BJ (cell line): ENCODE measurements at regions of chr9 and their contacts with region 1.

Region 1: GRCh38 chr9:129726322-129727160 is 26.3 kb downstream of the PTGES start:
- DNase-seq: peak; percentile 45
- H3K4me3 ChIP-seq: no peak overlapping the region
- H3K27me3 ChIP-seq: no peaks in the 10 kb centered on the region
- CTCF ChIP-seq: peak; percentile 99

Region 2: GRCh38 chr9:129495534-129496325 is 230.8 kb before region 1 on chr9:
- CTCF ChIA-PET with region 1: no interaction called
- POLR2A ChIA-PET with region 1: no interaction called
- DNase-seq: no peak
- H3K4me3 ChIP-seq: peak overlapping the region; percentile 82
- H3K27me3 ChIP-seq: no peaks in the 10 kb centered on the region
- CTCF ChIP-seq: no peak

Region 3: DNA sequence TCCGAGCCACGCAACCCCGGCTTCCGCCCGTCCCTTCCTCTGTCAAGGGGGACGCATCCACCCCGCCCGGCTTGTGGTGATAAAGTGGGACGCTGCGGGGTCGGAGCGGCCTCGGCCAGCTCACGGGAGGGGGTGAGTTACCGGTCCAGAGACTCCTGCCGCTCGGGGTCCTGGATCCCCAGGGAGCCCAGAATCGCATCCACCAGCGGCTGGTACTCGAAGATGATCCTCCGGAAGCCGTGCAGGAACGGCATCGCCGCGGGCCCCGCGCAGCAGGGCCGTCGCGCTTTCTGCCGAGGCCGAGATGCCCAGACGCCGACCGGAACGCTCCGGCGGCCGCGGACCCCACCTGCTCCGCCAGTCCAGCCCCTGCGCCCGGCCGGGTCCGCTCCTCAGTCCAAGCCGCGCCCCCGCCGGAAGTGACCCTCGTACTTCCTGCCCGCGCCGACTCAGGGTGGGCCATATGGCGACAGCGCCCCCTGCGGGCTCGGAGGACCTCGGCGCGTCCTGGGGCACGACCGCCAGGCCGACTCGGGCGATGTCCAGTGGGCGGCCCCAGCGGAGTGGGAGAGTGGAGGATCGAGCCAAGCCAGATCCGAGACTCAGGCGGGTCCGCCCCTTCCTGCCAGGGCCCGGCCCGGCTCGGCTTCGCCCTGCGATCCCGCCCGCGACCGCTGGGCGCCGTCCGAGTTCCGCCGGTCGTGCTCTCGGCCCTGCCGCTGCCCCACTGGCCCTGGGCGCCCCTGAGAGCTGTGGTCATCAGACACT is 84.6 kb before region 1 on chr9 and contains the start of gene ASB6:
- CTCF ChIA-PET with region 1: interaction called, 79 read pairs
- POLR2A ChIA-PET with region 1: no interaction called
- DNase-seq: peak; percentile 69
- H3K4me3 ChIP-seq: peak within 1 kb of the TSS; percentile 98
- H3K27me3 ChIP-seq: no peaks in the 10 kb centered on the region
- CTCF ChIP-seq: peak; percentile 83
- polyA plus RNA-seq, gene ASB6: 13.1 and 23.2 TPM in 2 replicates

Region 4: GRCh38 chr9:129702589-129703520 is 23.7 kb before region 1 on chr9:
- CTCF ChIA-PET with region 1: interaction called, 24 read pairs
- POLR2A ChIA-PET with region 1: interaction called, 6 read pairs
- DNase-seq: peak; percentile 95
- H3K4me3 ChIP-seq: no peak overlapping the region
- H3K27me3 ChIP-seq: no peaks in the 10 kb centered on the region
- CTCF ChIP-seq: no peak

Region 5: DNA sequence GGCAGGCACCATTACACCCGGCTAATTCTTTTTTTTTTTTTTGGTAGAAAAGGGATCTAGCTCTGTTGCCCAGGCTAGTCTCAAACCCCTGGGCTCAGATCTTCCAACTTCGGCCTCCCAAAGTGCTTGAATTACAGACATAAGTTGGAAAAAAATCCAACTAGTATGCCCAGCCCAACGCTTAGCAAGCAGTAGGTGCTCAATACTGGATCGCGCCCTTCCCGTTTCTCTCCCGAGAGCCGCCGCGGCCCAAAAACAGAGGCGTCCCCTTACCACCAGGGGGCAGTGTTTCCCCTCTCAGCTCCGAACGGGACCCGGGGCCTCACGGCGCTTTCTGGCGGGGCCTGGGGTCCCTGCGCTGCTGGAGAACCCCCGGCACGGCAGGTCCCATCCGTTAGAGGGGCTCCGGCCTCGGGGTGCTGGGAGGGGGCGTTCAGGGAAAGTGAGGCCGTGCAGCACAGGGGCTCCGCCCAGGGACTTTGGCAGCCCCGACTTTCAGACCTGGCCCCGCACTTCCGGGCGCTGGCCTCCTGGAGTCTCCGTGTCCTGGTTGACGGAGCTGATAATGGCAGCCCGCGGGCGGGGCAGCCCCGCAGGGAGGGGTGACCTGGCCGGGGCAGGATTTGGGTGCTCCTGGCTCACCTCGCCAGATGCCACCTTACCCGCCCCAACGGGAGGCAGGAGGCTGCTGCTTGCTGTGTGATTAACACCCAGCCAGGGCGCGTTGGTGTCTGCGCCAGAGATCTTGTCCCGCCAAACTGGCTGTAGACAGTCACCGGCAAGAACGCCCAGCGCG is 11.1 kb after region 1 on chr9:
- CTCF ChIA-PET with region 1: interaction called, 69 read pairs
- POLR2A ChIA-PET with region 1: interaction called, 4 read pairs
- DNase-seq: no peak
- H3K4me3 ChIP-seq: peak overlapping the region; percentile 37
- H3K27me3 ChIP-seq: no peaks in the 10 kb centered on the region
- CTCF ChIP-seq: peak; percentile 95

Region 6: GRCh38 chr9:129783516-129784361 is 57.2 kb after region 1 on chr9:
- CTCF ChIA-PET with region 1: interaction called, 46 read pairs
- POLR2A ChIA-PET with region 1: no interaction called
- DNase-seq: no peak
- H3K4me3 ChIP-seq: no peak overlapping the region
- H3K27me3 ChIP-seq: no peaks in the 10 kb centered on the region
- CTCF ChIP-seq: peak; percentile 92

Region 7: GRCh38 chr9:129868916-129869486 is 142.5 kb after region 1 on chr9:
- CTCF ChIA-PET with region 1: no interaction called
- POLR2A ChIA-PET with region 1: no interaction called
- DNase-seq: no peak
- H3K4me3 ChIP-seq: no peak overlapping the region
- H3K27me3 ChIP-seq: no peaks in the 10 kb centered on the region
- CTCF ChIP-seq: no peak